ENCODE measurements at regions of chr2 and their contacts with region 1.

Region 1: DNA sequence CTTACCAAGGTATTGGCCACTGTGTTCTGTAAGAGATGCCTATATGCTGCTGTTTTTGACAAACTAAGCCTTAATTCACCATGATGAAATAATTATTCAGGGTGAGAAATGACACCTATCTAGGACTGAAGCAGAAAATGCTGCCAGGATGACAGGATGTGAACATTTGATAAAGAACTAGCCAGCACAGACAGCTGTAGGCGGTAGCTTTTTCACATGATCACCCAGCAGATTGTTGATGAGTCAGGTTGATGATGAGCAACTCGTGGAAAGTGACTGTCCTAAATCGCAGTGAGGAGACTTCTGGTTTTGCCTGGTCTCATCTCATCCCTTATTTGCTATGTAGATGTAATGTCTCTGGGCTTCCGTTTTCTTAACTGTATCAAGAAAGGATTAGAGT is 144.1 kb downstream of the PRPF40A start:
- DNase-seq: peak; percentile 53
- ATAC-seq: peak; percentile 63
- H3K4me3 ChIP-seq: no peak overlapping the region
- H3K27ac ChIP-seq: no peak overlapping the region
- H3K4me1 ChIP-seq: peaks cover 25% of the 10 kb centered on the region; the same call in 1 of the 2 replicates
- H3K27me3 ChIP-seq: no peaks in the 10 kb centered on the region
- CTCF ChIP-seq: no peak

Region 2: DNA sequence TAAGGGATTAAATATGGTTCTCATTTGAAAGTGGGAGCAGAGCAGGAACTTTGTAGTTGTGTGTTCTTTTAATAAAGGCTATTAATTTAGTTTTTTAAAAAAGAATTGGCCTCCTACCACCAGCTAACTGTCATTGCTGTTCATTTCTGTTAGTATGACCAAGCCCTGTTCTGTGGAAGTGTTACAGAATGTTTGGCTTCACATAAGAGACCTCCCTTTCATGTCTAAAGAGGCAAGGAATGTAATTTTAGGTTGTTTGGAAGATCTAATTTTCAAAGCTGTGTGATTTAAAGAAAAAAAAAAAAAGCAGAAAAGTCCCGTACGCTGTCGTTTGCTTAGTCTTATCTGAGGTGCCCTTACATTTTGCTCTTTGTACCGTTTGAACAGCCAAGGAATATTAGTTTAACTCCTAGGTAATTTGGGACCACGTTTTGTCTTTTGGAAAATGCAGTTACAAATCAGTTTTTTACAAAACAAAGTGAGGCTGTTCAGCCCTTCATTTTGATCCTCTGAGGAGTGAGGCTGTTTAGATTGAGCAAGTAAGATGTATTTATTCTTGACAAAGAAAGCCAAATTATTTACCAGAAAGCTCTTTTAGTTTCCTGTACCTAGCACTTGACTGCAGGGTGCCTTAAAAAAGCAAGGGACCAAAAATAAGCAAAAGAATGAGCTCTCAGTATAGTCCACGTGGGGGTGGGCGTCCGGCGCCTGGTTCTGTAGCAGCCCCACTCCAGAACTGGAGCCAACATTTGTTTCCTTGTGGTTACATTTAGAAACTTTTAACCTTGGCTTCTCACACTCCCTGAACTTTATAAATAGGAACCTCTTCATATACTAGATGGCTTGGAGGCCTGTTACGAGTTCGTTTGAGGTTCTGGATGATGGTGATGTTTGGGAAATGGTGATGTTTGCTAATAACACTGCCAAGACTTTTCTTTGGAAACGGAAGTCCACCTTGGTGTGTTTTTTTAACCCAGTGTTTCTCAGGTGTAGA is 102.0 kb before region 1 on chr2:
- CTCF ChIA-PET with region 1: no interaction called
- POLR2A ChIA-PET with region 1: no interaction called
- intact Hi-C with region 1: loop called (anchors 5 kb)
- DNase-seq: no peak
- ATAC-seq: no peak
- H3K4me3 ChIP-seq: no peak overlapping the region
- H3K27ac ChIP-seq: no peak overlapping the region
- H3K4me1 ChIP-seq: peaks cover 53% of the 10 kb centered on the region
- H3K27me3 ChIP-seq: no peaks in the 10 kb centered on the region
- CTCF ChIP-seq: no peak

Region 3: GRCh38 chr2:152611458-152612231 is 38.5 kb after region 1 on chr2:
- CTCF ChIA-PET with region 1: no interaction called
- POLR2A ChIA-PET with region 1: no interaction called
- intact Hi-C with region 1: loop called (anchors 5 kb)
- DNase-seq: no peak
- ATAC-seq: peak; percentile 48; the same call in 1 of the 2 replicates
- H3K4me3 ChIP-seq: no peak overlapping the region
- H3K27ac ChIP-seq: no peak overlapping the region
- H3K4me1 ChIP-seq: peaks cover 3% of the 10 kb centered on the region
- H3K27me3 ChIP-seq: no peaks in the 10 kb centered on the region
- CTCF ChIP-seq: no peak

Region 4: GRCh38 chr2:152740743-152741328 is 167.7 kb after region 1 on chr2:
- CTCF ChIA-PET with region 1: no interaction called
- POLR2A ChIA-PET with region 1: no interaction called
- intact Hi-C with region 1: no loop called
- DNase-seq: peak; percentile 80
- ATAC-seq: no peak
- H3K4me3 ChIP-seq: no peak overlapping the region
- H3K27ac ChIP-seq: no peak overlapping the region
- H3K4me1 ChIP-seq: no peaks in the 10 kb centered on the region
- H3K27me3 ChIP-seq: no peaks in the 10 kb centered on the region
- CTCF ChIP-seq: peak; percentile 90